ENCODE measurements at regions of chr2 and their contacts with region 1.

Region 1: GRCh38 chr2:108583903-108584520 is 49.7 kb downstream of the LIMS1 start:
- DNase-seq: peak; percentile 74
- CTCF ChIP-seq: peak; percentile 79

Region 2: GRCh38 chr2:108228006-108228405 is 356.0 kb before region 1 on chr2:
- CTCF ChIA-PET with region 1: no interaction called
- POLR2A ChIA-PET with region 1: no interaction called
- DNase-seq: no peak
- CTCF ChIP-seq: no peak

Region 3: GRCh38 chr2:108354136-108354535 is 229.9 kb before region 1 on chr2:
- CTCF ChIA-PET with region 1: interaction called, 10 read pairs
- POLR2A ChIA-PET with region 1: no interaction called
- DNase-seq: no peak
- CTCF ChIP-seq: no peak

Region 4: DNA sequence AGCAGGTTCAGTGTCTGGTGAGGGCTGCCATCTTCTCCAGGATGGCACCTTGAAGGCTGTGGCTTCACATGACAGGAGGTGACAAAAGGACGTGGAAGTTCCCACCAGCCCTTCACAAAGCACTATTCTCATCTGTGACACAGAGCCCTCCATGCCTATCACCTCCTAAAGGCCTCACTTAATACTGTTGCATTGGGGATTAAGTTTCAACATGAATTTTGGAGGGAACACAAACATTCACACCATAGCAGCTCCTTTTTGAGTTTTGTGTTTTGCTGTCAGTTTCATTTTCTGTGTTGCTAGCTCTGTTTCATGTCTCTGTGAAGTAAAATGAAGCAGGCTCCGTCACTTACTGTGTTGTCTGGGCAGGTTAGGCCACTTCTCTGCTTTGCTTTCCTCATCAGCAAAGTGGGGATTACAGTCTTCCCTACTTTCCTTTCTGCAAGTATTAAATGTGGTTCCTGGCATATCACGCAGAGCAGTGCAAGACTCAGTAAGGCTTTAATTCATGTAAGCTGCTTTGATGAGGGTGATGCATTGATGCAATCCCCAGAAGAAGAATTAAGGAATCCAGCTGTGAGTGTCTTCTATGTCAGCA is 18.1 kb before region 1 on chr2:
- CTCF ChIA-PET with region 1: interaction called, 57 read pairs
- POLR2A ChIA-PET with region 1: no interaction called
- DNase-seq: no peak
- CTCF ChIP-seq: no peak

Region 5: DNA sequence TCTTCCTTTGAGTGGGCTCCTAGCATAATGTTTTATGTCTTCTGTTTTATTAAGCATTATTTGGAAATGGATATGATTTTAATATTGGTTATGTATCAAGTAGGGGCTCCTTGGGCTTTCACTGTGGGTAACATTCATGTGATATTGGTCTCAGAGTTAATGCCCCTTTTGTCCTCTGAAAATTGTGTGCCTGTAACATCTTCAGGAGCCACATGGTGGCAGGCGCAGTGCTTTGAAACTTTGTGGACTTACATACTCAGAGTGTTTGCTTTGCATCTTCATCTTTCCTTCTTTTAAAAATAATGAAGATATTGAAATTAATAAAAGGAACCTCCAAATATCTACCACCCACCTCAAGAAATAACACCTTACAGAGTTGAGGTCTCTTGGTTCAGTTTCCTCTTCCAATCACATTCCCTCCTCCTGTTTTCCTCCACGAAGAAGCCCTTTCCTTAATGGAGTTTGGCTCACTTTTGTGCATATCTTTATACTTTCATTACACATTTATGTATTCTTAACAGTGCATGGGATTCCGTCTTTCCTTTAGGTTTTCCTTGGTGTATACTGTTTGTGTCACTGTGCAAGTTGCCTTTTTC is 23.8 kb after region 1 on chr2:
- CTCF ChIA-PET with region 1: interaction called, 25 read pairs
- POLR2A ChIA-PET with region 1: no interaction called
- DNase-seq: peak; percentile 42
- CTCF ChIP-seq: peak; percentile 80